ENCODE measurements at regions of chr13 and their contacts with region 1.

Region 1: DNA sequence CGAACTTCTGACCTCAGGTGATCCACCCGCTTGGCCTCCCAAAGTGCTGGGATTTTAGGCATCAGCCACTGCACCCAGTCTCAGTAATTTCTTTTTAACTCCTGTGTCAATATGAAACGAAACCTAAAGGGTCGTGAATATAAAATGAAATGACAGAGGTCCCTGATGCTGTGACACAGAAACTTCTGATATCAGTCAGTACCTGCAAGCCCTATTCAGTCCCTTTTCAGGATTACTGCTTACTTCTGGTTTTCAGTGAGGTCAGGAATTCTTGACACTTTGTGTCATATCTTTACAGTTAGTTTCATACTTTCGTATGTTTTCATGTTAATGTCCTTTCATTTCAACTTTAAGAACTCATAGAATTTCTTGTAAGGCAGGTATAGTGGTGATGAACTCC is 58.7 kb downstream of the RNF17 start:
- DNase-seq: no peak
- ATAC-seq: no peak
- H3K4me3 ChIP-seq: no peak overlapping the region
- H3K4me3 Mint-ChIP-seq: no peak overlapping the region
- H3K27ac ChIP-seq: no peak overlapping the region
- H3K27ac Mint-ChIP-seq: no peak overlapping the region
- H3K4me1 ChIP-seq: no peaks in the 10 kb centered on the region
- H3K4me1 Mint-ChIP-seq: no peaks in the 10 kb centered on the region
- H3K27me3 ChIP-seq: no peaks in the 10 kb centered on the region
- H3K27me3 Mint-ChIP-seq: peaks cover 22% of the 10 kb centered on the region
- CTCF ChIP-seq: no peak

Region 2: GRCh38 chr13:24875561-24875960 is 52.9 kb after region 1 on chr13:
- CTCF ChIA-PET with region 1: no interaction called
- POLR2A ChIA-PET with region 1: no interaction called
- intact Hi-C with region 1: no loop called
- DNase-seq: no peak
- ATAC-seq: no peak
- H3K4me3 ChIP-seq: no peak overlapping the region
- H3K4me3 Mint-ChIP-seq: no peak overlapping the region
- H3K27ac ChIP-seq: no peak overlapping the region
- H3K27ac Mint-ChIP-seq: no peak overlapping the region
- H3K4me1 ChIP-seq: no peaks in the 10 kb centered on the region
- H3K4me1 Mint-ChIP-seq: no peaks in the 10 kb centered on the region
- H3K27me3 ChIP-seq: no peaks in the 10 kb centered on the region
- H3K27me3 Mint-ChIP-seq: peaks cover 11% of the 10 kb centered on the region
- CTCF ChIP-seq: no peak

Region 3: DNA sequence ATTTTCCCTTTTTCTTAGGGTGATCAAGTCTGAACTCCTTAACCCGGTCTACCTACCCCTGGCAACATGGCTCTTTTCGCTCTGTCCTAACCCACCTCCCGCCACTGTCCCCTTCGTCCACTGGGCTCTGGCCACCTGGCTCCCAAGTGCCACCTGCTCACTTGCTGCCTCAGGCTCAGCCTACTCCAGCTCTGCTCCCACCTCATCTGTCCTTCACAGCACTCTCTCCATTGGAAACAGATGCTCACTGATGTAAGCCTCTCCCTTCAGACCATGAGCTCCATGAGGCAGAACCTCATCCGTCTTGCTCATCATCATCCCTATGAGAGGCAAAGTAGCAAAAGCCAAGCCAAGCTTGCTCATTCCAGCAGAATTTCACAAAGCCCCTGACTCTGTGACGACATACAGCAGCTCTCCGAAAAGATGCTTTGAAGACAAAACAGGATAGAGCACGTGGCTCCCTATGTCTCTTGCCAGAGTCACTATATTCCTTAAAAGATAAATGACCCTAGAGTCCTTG is 384.7 kb after region 1 on chr13:
- CTCF ChIA-PET with region 1: no interaction called
- POLR2A ChIA-PET with region 1: interaction called, 10 read pairs
- intact Hi-C with region 1: no loop called
- DNase-seq: no peak
- ATAC-seq: no peak
- H3K4me3 ChIP-seq: no peak overlapping the region
- H3K4me3 Mint-ChIP-seq: no peak overlapping the region
- H3K27ac ChIP-seq: no peak overlapping the region
- H3K27ac Mint-ChIP-seq: no peak overlapping the region
- H3K4me1 ChIP-seq: no peaks in the 10 kb centered on the region
- H3K4me1 Mint-ChIP-seq: no peaks in the 10 kb centered on the region
- H3K27me3 ChIP-seq: no peaks in the 10 kb centered on the region
- H3K27me3 Mint-ChIP-seq: peaks cover 4% of the 10 kb centered on the region
- CTCF ChIP-seq: no peak